AG04449 (cell line): ENCODE measurements at regions of chr11 and their contacts with region 1.

Region 1: GRCh38 chr11:43282607-43283440 is 29.0 kb upstream of the API5 start:
- DNase-seq: no peak
- H3K4me3 ChIP-seq: no peak overlapping the region
- CTCF ChIP-seq: peak; percentile 80

Region 2: GRCh38 chr11:42770444-42771065 is 512.3 kb before region 1 on chr11:
- CTCF ChIA-PET with region 1: interaction called, 60 read pairs
- POLR2A ChIA-PET with region 1: no interaction called
- DNase-seq: no peak
- H3K4me3 ChIP-seq: no peak overlapping the region
- CTCF ChIP-seq: peak; percentile 49

Region 3: GRCh38 chr11:43267856-43268580 is 14.8 kb before region 1 on chr11:
- CTCF ChIA-PET with region 1: interaction called, 16 read pairs
- POLR2A ChIA-PET with region 1: no interaction called
- DNase-seq: no peak
- H3K4me3 ChIP-seq: no peak overlapping the region
- CTCF ChIP-seq: no peak

Region 4: DNA sequence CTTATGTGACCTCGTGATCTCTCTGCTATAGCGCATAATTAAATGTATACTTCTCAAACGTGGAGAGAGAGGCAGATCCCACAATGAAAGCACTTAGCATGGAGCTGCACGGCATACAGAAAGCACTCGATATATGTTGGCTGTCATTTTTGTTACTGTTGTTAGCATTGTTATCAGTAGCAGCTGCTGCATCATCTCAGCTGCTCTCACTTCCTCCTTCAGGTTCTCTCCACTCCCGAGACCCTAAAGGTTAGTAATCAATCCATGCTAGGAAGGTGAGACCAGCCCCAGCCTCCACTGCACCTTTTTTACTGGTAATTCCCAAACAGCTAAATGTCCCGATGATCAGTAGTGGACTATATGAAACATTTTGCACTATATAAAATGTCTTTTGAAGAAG is 15.6 kb after region 1 on chr11:
- CTCF ChIA-PET with region 1: interaction called, 32 read pairs
- POLR2A ChIA-PET with region 1: no interaction called
- DNase-seq: no peak
- H3K4me3 ChIP-seq: no peak overlapping the region
- CTCF ChIP-seq: no peak

Region 5: DNA sequence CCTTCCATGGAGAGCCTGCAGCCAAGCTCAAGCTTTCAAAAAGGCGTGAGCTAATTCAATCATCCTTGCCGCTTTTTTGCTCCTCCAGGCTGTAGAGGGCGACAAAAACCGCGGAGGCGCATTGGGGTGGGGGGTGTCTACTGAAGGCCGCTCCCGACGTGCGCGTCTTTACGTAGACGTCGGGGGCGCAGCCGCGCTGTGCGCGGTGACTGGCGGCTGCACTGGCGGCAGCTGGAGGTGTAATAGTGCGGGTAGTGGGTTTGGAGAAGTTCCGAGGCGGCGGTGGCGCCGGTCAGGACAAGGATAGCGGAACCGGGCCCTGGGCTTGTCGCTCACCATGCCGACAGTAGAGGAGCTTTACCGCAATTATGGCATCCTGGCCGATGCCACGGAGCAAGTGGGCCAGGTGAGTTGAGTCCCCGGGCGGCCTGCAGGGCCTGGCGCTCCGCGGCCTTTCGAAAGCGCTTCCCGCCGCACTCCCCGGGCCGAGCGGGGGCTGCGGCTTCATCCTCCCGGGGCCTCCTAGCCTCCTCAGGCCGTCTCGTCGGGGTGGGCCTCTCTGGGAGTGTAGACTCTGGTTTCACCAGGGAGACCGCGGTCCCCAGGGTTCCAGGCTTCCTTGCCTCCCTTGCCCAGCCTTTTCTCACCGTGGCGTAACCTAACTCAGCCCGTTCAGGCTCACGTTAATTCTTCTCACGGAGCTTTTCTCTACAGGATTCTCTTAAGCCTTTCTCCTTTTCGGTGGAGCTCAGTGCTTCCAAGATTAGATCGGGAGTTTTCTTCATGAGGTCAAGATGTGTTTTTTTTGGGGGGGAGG is 29.2 kb after region 1 on chr11 and contains the start of gene API5:
- CTCF ChIA-PET with region 1: interaction called, 20 read pairs
- POLR2A ChIA-PET with region 1: no interaction called
- DNase-seq: peak; percentile 65
- H3K4me3 ChIP-seq: peak within 1 kb of the TSS; percentile 91
- CTCF ChIP-seq: peak; percentile 89